Activated CD4-positive, alpha-beta memory T cell treated with anti-CD3 and anti-CD28 coated beads for 36 hours (primary cell): ENCODE measurements at regions of chr2 and their contacts with region 1.

Region 1: DNA sequence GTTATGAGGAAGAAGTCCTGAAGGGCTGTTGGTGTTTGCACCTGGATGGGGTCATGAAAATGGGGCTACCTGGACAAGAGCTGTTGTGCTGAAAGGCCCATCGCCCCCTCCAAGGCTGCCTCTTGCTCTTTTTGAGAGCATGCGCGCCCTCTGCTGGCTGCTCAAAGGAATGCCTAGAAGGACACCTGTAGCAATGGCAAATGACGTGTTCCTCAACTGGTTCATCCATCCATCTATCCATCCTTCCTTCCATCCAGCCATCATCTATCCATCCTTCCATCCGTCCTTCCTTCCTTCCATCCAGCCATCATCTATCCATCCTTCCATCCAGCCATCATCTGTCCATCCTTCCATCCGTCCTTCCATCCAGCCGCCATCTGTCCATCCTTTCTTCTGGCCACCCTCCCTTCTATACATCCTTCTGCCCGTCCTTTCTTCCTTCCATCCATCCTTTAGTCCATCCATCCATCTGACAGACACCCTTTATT is 17.2 kb upstream of the RPL31 start:
- DNase-seq: peak; percentile 82
- H3K4me3 Mint-ChIP-seq: no peak overlapping the region
- H3K27ac Mint-ChIP-seq: no peak overlapping the region
- H3K4me1 Mint-ChIP-seq: peaks cover 2% of the 10 kb centered on the region
- H3K27me3 Mint-ChIP-seq: peaks cover 2% of the 10 kb centered on the region

Region 2: GRCh38 chr2:100427628-100428258 is 557.2 kb before region 1 on chr2:
- CTCF ChIA-PET with region 1: interaction called, 8 read pairs
- POLR2A ChIA-PET with region 1: no interaction called
- intact Hi-C with region 1: loop called (anchors 5 kb)
- DNase-seq: peak; percentile 82
- H3K4me3 Mint-ChIP-seq: no peak overlapping the region
- H3K27ac Mint-ChIP-seq: no peak overlapping the region
- H3K4me1 Mint-ChIP-seq: peaks cover 6% of the 10 kb centered on the region
- H3K27me3 Mint-ChIP-seq: peaks cover 12% of the 10 kb centered on the region

Region 3: GRCh38 chr2:100588071-100588786 is 396.7 kb before region 1 on chr2:
- CTCF ChIA-PET with region 1: interaction called, 20 read pairs
- POLR2A ChIA-PET with region 1: no interaction called
- intact Hi-C with region 1: no loop called
- DNase-seq: peak; percentile 34
- H3K4me3 Mint-ChIP-seq: peak overlapping the region; percentile 5
- H3K27ac Mint-ChIP-seq: peak overlapping the region; percentile 73
- H3K4me1 Mint-ChIP-seq: peaks cover 43% of the 10 kb centered on the region
- H3K27me3 Mint-ChIP-seq: no peaks in the 10 kb centered on the region

Region 4: GRCh38 chr2:100610381-100610831 is 374.5 kb before region 1 on chr2:
- CTCF ChIA-PET with region 1: interaction called, 25 read pairs
- POLR2A ChIA-PET with region 1: no interaction called
- intact Hi-C with region 1: loop called (anchors 1 kb)
- DNase-seq: peak; percentile 83
- H3K4me3 Mint-ChIP-seq: no peak overlapping the region
- H3K27ac Mint-ChIP-seq: no peak overlapping the region
- H3K4me1 Mint-ChIP-seq: peaks cover 2% of the 10 kb centered on the region
- H3K27me3 Mint-ChIP-seq: peaks cover 6% of the 10 kb centered on the region

Region 5: DNA sequence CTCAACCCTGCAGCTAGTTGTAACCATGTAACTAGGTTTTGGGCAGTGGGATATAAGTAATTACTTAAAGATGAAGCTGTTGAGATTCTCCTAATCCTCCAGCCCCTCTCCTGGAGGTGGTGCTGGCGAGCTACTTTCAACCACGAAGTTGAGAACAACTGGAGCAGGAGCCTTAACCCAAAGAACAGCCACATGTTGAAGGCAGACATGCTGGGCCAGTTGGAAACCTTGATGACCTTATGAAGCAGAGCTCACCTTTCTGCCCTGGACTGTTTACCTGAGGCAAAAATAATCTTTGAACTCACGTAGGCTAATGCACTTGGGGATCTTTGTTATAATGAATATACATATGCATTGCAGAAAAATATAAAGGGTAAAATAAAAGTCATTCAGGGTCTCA is 254.6 kb before region 1 on chr2:
- CTCF ChIA-PET with region 1: interaction called, 6 read pairs
- POLR2A ChIA-PET with region 1: no interaction called
- intact Hi-C with region 1: loop called (anchors 1 kb)
- DNase-seq: peak; percentile 65
- H3K4me3 Mint-ChIP-seq: no peak overlapping the region
- H3K27ac Mint-ChIP-seq: no peak overlapping the region
- H3K4me1 Mint-ChIP-seq: no peaks in the 10 kb centered on the region
- H3K27me3 Mint-ChIP-seq: peaks cover 12% of the 10 kb centered on the region

Region 6: GRCh38 chr2:100818606-100819369 is 166.1 kb before region 1 on chr2:
- CTCF ChIA-PET with region 1: no interaction called
- POLR2A ChIA-PET with region 1: no interaction called
- intact Hi-C with region 1: loop called (anchors 10 kb)
- DNase-seq: peak; percentile 21
- H3K4me3 Mint-ChIP-seq: peak overlapping the region; percentile 61
- H3K27ac Mint-ChIP-seq: no peak overlapping the region
- H3K4me1 Mint-ChIP-seq: peaks cover 13% of the 10 kb centered on the region
- H3K27me3 Mint-ChIP-seq: peaks cover 38% of the 10 kb centered on the region

Region 7: DNA sequence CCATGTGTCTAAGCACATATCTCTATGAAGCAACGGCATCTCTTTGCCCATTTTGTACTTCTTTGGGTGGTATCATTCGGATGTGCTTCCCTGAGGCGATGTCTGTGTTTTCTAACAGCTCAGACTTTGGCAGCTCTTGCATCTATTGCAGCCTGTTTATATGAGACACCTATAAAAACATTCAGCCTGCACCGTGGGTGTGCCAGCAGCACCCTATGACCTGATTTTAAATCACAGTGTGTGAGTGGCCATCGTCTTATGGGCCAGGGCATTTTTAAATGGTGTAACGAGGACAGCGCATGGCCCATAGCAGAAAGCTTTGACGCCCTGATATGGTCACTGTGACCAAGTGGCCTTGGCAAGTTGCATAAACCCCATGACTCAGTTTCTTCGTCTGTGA is 152.1 kb before region 1 on chr2:
- CTCF ChIA-PET with region 1: no interaction called
- POLR2A ChIA-PET with region 1: no interaction called
- intact Hi-C with region 1: no loop called
- DNase-seq: no peak
- H3K4me3 Mint-ChIP-seq: no peak overlapping the region
- H3K27ac Mint-ChIP-seq: no peak overlapping the region
- H3K4me1 Mint-ChIP-seq: no peaks in the 10 kb centered on the region
- H3K27me3 Mint-ChIP-seq: peaks cover 19% of the 10 kb centered on the region

Region 8: GRCh38 chr2:101387151-101387807 is 402.3 kb after region 1 on chr2 and contains the start of gene CREG2:
- CTCF ChIA-PET with region 1: no interaction called
- POLR2A ChIA-PET with region 1: no interaction called
- intact Hi-C with region 1: no loop called
- DNase-seq: peak; percentile 70
- H3K4me3 Mint-ChIP-seq: peak within 1 kb of the TSS; percentile 52
- H3K27ac Mint-ChIP-seq: no peak within 1 kb of the TSS
- H3K4me1 Mint-ChIP-seq: peaks cover 11% of the 10 kb centered on the region
- H3K27me3 Mint-ChIP-seq: peaks cover 32% of the 10 kb centered on the region
- total RNA-seq, gene CREG2: not detected